CD4-positive, alpha-beta memory T cell (primary cell): ENCODE measurements at regions of chr3 and their contacts with region 1.

Region 1: GRCh38 chr3:39288300-39288808 is 8.5 kb upstream of the CX3CR1 start:
- DNase-seq: peak; percentile 77 to 82 (median 79)
- H3K4me3 ChIP-seq: no peak overlapping the region
- H3K4me3 Mint-ChIP-seq: peak overlapping the region in 1 of 8 donors; percentile 46
- H3K27ac ChIP-seq: peak overlapping the region; percentile 14
- H3K27ac Mint-ChIP-seq: peak overlapping the region in 6 of 7 donors; percentile 24 to 88 (median 66)
- H3K4me1 ChIP-seq: peaks cover 9% of the 10 kb centered on the region
- H3K4me1 Mint-ChIP-seq: peaks cover 17 to 41% (median 30%) of the 10 kb centered on the region in 4 donors
- H3K27me3 ChIP-seq: no peaks in the 10 kb centered on the region
- H3K27me3 Mint-ChIP-seq: no peaks in the 10 kb centered on the region

Region 2: GRCh38 chr3:39000008-39000450 is 288.3 kb before region 1 on chr3:
- CTCF ChIA-PET with region 1: interaction called, 9 read pairs
- POLR2A ChIA-PET with region 1: no interaction called
- intact Hi-C with region 1: loop called (anchors 1 kb)
- DNase-seq: peak in 4 of 5 donors; percentile 26 to 34 (median 28)
- H3K4me3 ChIP-seq: no peak overlapping the region
- H3K4me3 Mint-ChIP-seq: no peak overlapping the region
- H3K27ac ChIP-seq: no peak overlapping the region
- H3K27ac Mint-ChIP-seq: no peak overlapping the region
- H3K4me1 ChIP-seq: no peaks in the 10 kb centered on the region
- H3K4me1 Mint-ChIP-seq: no peaks in the 10 kb centered on the region
- H3K27me3 ChIP-seq: no peaks in the 10 kb centered on the region
- H3K27me3 Mint-ChIP-seq: peaks cover 5 to 10% of the 10 kb centered on the region in 2 donors

Region 3: GRCh38 chr3:39107388-39108199 is 180.8 kb before region 1 on chr3 and contains the starts of genes GORASP1 and TTC21A:
- CTCF ChIA-PET with region 1: interaction called, 170 read pairs
- POLR2A ChIA-PET with region 1: no interaction called
- intact Hi-C with region 1: no loop called
- DNase-seq: peak; percentile 58 to 87 (median 70)
- H3K4me3 ChIP-seq: peak within 1 kb of the TSS; percentile 67 to 71
- H3K4me3 Mint-ChIP-seq: peak within 1 kb of the TSS; percentile 87 to 99 (median 94)
- H3K27ac ChIP-seq: peak within 1 kb of the TSS; percentile 76
- H3K27ac Mint-ChIP-seq: peak within 1 kb of the TSS; percentile 88 to 99 (median 96)
- H3K4me1 ChIP-seq: peaks cover 45% of the 10 kb centered on the region
- H3K4me1 Mint-ChIP-seq: peaks cover 37 to 60% (median 49%) of the 10 kb centered on the region in 4 donors
- H3K27me3 ChIP-seq: no peaks in the 10 kb centered on the region
- H3K27me3 Mint-ChIP-seq: no peaks in the 10 kb centered on the region
- total RNA-seq, gene GORASP1: 57.1 to 58.4 TPM
- total RNA-seq, gene TTC21A: 3.0 to 3.9 TPM

Region 4: DNA sequence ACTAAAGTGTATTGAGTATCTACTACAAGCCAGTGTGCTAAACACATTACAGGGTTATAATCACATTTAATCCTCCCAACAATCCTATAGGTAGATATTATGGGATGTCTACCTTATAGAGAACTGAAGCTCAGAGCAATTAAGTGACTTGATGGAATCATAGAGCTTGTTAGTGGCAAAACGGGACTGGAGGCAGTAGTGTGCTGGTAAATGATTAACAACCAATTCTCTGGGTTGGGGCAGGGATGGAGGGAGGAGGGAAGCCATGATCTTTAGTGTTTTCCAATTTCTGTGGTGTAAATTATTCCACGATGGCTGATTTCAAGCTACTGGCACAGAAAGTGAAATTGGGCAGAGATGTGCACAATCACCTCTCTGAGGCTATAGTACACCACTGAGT is 116.5 kb before region 1 on chr3:
- CTCF ChIA-PET with region 1: interaction called, 14 read pairs
- POLR2A ChIA-PET with region 1: no interaction called
- intact Hi-C with region 1: no loop called
- DNase-seq: no peak
- H3K4me3 ChIP-seq: no peak overlapping the region
- H3K4me3 Mint-ChIP-seq: no peak overlapping the region
- H3K27ac ChIP-seq: no peak overlapping the region
- H3K27ac Mint-ChIP-seq: no peak overlapping the region
- H3K4me1 ChIP-seq: peaks cover under 1% of the 10 kb centered on the region
- H3K4me1 Mint-ChIP-seq: peaks cover 0 to 11% (median 6%) of the 10 kb centered on the region in 4 donors
- H3K27me3 ChIP-seq: no peaks in the 10 kb centered on the region
- H3K27me3 Mint-ChIP-seq: no peaks in the 10 kb centered on the region

Region 5: DNA sequence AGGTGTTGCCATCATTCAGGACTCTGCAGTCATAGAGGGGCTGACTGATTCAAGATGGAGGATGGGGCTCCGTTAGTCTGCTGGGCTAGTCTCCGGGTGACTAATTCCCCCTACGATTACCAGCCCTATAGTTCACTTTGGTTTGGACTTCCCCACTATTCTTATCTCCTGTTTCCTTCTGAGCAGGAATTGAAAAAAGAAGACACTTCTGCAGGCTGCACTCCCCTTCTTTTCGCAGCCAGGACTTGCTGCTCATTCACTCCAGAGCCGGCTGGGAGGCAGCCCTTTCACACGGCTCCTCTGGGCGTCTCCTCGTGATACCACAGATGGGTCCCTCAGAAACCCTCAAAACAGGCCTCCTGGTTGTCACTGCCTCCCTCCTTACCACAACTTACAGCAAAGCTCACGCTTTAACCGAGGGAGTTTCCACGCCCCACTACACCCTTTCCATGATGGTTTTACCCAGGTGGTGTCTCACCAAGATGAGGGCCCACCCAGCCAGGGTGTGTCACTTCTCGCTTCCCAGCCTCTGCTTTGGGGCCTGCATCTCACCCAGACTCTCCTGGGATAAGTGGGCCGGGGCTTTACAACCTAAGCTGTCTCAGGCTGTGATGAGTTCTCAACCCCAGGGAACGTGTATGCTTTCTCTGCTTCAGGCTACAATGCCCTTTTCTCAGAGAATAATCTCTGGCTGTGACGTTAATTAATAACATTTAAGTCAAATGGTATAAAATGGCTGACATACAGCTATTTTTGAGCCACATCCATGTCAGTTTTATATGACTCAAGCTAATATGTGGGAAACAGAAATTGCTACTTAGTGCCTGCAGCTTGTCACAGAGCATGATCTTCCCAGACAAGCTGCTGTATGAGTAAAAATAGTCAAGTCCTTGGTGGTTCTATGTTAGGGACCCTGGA is 20.5 kb before region 1 on chr3:
- CTCF ChIA-PET with region 1: interaction called, 43 read pairs
- POLR2A ChIA-PET with region 1: no interaction called
- intact Hi-C with region 1: no loop called
- DNase-seq: peak; percentile 73 to 93 (median 77)
- H3K4me3 ChIP-seq: peak overlapping the region in 1 of 2 donors; percentile 40
- H3K4me3 Mint-ChIP-seq: peak overlapping the region in 7 of 8 donors; percentile 69 to 84 (median 80)
- H3K27ac ChIP-seq: peak overlapping the region; percentile 61
- H3K27ac Mint-ChIP-seq: peak overlapping the region; percentile 86 to 98 (median 96)
- H3K4me1 ChIP-seq: peaks cover 25% of the 10 kb centered on the region
- H3K4me1 Mint-ChIP-seq: peaks cover 19 to 42% (median 22%) of the 10 kb centered on the region in 4 donors
- H3K27me3 ChIP-seq: no peaks in the 10 kb centered on the region
- H3K27me3 Mint-ChIP-seq: no peaks in the 10 kb centered on the region

Region 6: DNA sequence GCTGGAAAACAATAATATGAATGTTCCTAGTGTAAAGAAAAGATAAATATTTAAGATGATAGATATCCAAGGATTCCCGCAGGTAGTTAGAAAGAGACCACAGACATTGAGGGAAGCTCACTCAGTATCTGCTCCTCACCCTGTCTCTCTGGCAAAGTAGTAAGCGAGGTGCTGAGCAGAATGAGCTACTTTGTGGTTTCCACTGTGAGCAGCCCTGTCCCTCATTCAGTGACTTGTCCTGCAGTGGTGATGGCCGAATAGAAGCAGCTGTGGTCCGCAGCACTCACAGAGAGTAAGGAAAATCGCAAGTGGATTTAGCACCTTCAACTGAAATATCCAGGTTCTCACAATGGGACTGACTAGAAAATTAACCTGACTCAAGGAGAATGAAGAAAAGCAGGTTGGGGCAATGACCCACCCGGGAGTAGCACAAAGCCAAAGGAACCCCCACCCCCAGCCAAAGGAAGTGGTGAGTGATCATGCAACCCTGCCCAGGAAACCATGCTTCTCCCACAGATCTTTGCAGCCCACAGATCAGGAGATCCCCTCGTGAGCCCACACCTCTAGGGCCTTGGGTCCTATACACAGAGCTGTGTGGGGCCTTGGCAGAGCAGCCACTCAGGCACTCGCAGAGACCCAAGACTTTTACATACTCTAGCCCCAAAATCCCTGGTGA is 73.0 kb after region 1 on chr3:
- CTCF ChIA-PET with region 1: interaction called, 10 read pairs
- POLR2A ChIA-PET with region 1: no interaction called
- intact Hi-C with region 1: no loop called
- DNase-seq: peak; percentile 56 to 80 (median 61)
- H3K4me3 ChIP-seq: peak overlapping the region in 1 of 2 donors; percentile 10
- H3K4me3 Mint-ChIP-seq: peak overlapping the region; percentile 41 to 81 (median 76)
- H3K27ac ChIP-seq: peak overlapping the region; percentile 17
- H3K27ac Mint-ChIP-seq: peak overlapping the region; percentile 73 to 93 (median 84)
- H3K4me1 ChIP-seq: peaks cover 46% of the 10 kb centered on the region
- H3K4me1 Mint-ChIP-seq: peaks cover 60 to 83% (median 70%) of the 10 kb centered on the region in 4 donors
- H3K27me3 ChIP-seq: no peaks in the 10 kb centered on the region
- H3K27me3 Mint-ChIP-seq: no peaks in the 10 kb centered on the region